Heart left ventricle (tissue), 16 donors: ENCODE measurements at regions of chr5 and their contacts with region 1.

Region 1: DNA sequence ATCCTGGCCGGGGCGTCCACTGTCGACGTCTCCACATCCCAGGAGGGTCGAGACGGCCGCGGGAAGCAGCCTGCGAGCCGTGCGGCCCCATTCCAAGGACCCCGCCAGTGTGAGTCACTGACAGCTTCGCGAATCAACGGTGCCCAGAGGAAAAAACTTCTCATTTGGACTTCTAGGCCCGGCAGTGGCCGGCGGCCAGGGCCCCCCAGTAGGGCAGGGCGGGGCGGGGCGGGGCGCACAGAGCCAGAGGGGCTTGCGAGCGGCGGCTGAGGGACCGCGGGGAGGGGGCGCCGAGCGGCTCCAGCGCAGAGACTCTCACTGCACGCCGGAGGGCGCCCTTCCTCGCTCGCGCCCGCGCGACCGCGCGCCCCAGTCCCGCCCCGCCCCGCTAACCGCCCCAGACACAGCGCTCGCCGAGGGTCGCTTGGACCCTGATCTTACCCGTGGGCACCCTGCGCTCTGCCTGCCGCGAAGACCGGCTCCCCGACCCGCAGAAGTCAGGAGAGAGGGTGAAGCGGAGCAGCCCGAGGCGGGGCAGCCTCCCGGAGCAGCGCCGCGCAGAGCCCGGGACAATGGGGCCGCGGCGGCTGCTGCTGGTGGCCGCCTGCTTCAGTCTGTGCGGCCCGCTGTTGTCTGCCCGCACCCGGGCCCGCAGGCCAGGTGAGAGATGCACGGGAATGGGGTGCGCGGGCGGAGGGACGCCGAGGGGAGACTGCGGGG is at the start of gene F2R:
- DNase-seq: peak; percentile 65 to 82 (median 78)
- ATAC-seq: peak; percentile 40 to 89 (median 86)
- H3K4me3 ChIP-seq: peak within 1 kb of the TSS; percentile 66 to 95 (median 83)
- H3K27ac ChIP-seq: peak within 1 kb of the TSS; percentile 20 to 92 (median 76)
- H3K4me1 ChIP-seq: peaks cover 0 to 60% (median 19%) of the 10 kb centered on the region in 12 donors
- H3K27me3 ChIP-seq: peaks cover 0 to 25% (median 0%) of the 10 kb centered on the region in 9 donors
- CTCF ChIP-seq: peak; percentile 35 to 76 (median 58)
- POLR2A ChIP-seq: no peak
- total RNA-seq, gene F2R: 8.6 to 28.2 (median 13.6) TPM

Region 2: GRCh38 chr5:76641514-76642120 is 74.3 kb before region 1 on chr5:
- intact Hi-C with region 1: loop called in 1 of 10 experiments (anchors 5 kb)
- DNase-seq: peak in 4 of 5 donors; percentile 35 to 68 (median 50)
- ATAC-seq: peak in 1 of 4 donors; percentile 49
- H3K4me3 ChIP-seq: no peak overlapping the region
- H3K27ac ChIP-seq: no peak overlapping the region
- H3K4me1 ChIP-seq: peaks cover 0 to 19% (median 0%) of the 10 kb centered on the region in 12 donors
- H3K27me3 ChIP-seq: no peaks in the 10 kb centered on the region
- CTCF ChIP-seq: peak; percentile 46 to 76 (median 66)
- POLR2A ChIP-seq: no peak

Region 3: GRCh38 chr5:76682387-76682786 is 33.5 kb before region 1 on chr5:
- intact Hi-C with region 1: loop called in 1 of 10 experiments (anchors 5 kb)
- DNase-seq: peak in 1 of 5 donors; percentile 23
- ATAC-seq: peak in 3 of 4 donors; percentile 54 to 78 (median 71)
- H3K4me3 ChIP-seq: no peak overlapping the region
- H3K27ac ChIP-seq: peak overlapping the region in 8 of 12 donors; percentile 20 to 61 (median 50)
- H3K4me1 ChIP-seq: peaks cover 0 to 43% (median 9%) of the 10 kb centered on the region in 12 donors
- H3K27me3 ChIP-seq: no peaks in the 10 kb centered on the region
- CTCF ChIP-seq: no peak
- POLR2A ChIP-seq: no peak

Region 4: GRCh38 chr5:76737846-76738245 is 21.9 kb after region 1 on chr5:
- intact Hi-C with region 1: loop called in 1 of 10 experiments (anchors 2 kb)
- DNase-seq: no peak
- ATAC-seq: no peak
- H3K4me3 ChIP-seq: no peak overlapping the region
- H3K27ac ChIP-seq: peak overlapping the region in 6 of 12 donors; percentile 10 to 81 (median 25)
- H3K4me1 ChIP-seq: peaks cover 0 to 41% (median 8%) of the 10 kb centered on the region in 12 donors
- H3K27me3 ChIP-seq: no peaks in the 10 kb centered on the region
- CTCF ChIP-seq: no peak
- POLR2A ChIP-seq: no peak

Region 5: GRCh38 chr5:76771705-76772405 is 56.0 kb after region 1 on chr5:
- intact Hi-C with region 1: loop called in 4 of 10 experiments (anchors 5 kb)
- DNase-seq: no peak
- ATAC-seq: no peak
- H3K4me3 ChIP-seq: no peak overlapping the region
- H3K27ac ChIP-seq: no peak overlapping the region
- H3K4me1 ChIP-seq: peaks cover 0 to 6% (median 0%) of the 10 kb centered on the region in 12 donors
- H3K27me3 ChIP-seq: no peaks in the 10 kb centered on the region
- CTCF ChIP-seq: no peak
- POLR2A ChIP-seq: no peak

Region 6: GRCh38 chr5:76790632-76791290 is 74.9 kb after region 1 on chr5:
- intact Hi-C with region 1: no loop called
- DNase-seq: peak in 4 of 5 donors; percentile 25 to 56 (median 35)
- ATAC-seq: peak; percentile 49 to 86 (median 79)
- H3K4me3 ChIP-seq: no peak overlapping the region
- H3K27ac ChIP-seq: peak overlapping the region; percentile 56 to 85 (median 72)
- H3K4me1 ChIP-seq: peaks cover 4 to 54% (median 23%) of the 10 kb centered on the region in 12 donors
- H3K27me3 ChIP-seq: no peaks in the 10 kb centered on the region
- CTCF ChIP-seq: no peak
- POLR2A ChIP-seq: peak in 1 of 2 donors; percentile 47

Region 7: GRCh38 chr5:77030097-77031071 is 314.5 kb after region 1 on chr5 and contains the start of gene AGGF1:
- intact Hi-C with region 1: loop called in 1 of 10 experiments (anchors 10 kb)
- DNase-seq: peak; percentile 94 to 97 (median 96)
- ATAC-seq: peak; percentile 100
- H3K4me3 ChIP-seq: peak within 1 kb of the TSS; percentile 82 to 100 (median 94)
- H3K27ac ChIP-seq: peak within 1 kb of the TSS; percentile 77 to 98 (median 90)
- H3K4me1 ChIP-seq: peaks cover 0 to 30% (median 17%) of the 10 kb centered on the region in 12 donors
- H3K27me3 ChIP-seq: no peaks in the 10 kb centered on the region
- CTCF ChIP-seq: no peak
- POLR2A ChIP-seq: peak in 1 of 2 donors; percentile 62
- total RNA-seq, gene AGGF1: 15.5 to 20.1 (median 16.7) TPM